ENCODE measurements at regions of chr9 and their contacts with region 1.

Region 1: DNA sequence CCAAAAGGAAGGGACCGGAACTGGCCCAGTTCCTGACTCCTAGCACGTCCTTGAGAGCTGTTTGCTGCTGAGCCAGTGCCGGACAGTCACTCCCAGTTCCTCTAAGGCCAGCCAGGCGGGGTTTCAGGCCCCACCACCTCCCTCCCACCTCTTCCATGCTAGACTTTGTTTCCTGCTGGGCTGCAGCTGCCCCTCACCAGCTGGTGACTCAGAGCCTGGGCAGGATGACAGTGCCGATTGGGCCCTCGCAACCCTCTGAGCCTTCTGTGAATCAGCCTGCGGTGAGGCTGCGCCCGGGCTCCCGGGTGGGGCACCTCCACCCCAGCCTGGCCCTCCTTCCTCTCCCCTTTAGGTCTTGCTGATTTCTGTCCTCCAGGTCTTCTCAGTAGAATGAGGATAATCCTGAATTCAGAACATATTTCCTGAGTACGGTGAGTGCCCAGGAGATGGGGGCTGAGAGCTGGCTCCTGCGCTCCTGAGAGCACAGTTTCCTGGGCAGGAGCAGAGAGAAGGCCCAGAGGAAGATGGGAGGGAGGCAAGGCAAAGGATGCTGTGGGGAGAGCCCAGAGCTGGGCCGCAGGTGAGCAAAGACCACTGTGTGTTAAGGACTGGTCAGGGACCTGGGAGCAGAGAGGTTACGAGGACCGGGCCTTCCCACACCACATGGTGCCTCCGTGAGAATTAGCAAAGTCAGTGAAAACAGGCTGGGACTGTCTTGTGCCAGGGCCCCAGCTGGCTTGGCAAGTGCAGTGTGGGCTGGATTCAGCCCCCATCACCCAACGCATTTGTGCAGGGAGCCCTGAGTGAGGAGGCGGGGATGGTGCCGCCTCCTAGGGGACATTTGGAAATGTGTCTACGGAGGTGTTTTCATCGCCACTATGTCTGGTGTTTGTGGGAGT is 32.9 kb upstream of the STXBP1 start:
- DNase-seq: peak; percentile 83 to 96 (median 95)
- H3K4me3 ChIP-seq: peak overlapping the region in 4 of 7 experiments; percentile 37 to 58 (median 49)
- H3K27ac ChIP-seq: peak overlapping the region in 1 of 2 experiments; percentile 56
- H3K4me1 ChIP-seq: peaks cover 3 to 55% (median 24%) of the 10 kb centered on the region in 4 experiments
- H3K27me3 ChIP-seq: no peaks in the 10 kb centered on the region

Region 2: GRCh38 chr9:127555768-127556397 is 23.3 kb before region 1 on chr9:
- CTCF ChIA-PET with region 1: interaction called, 29 read pairs
- POLR2A ChIA-PET with region 1: no interaction called
- DNase-seq: peak; percentile 95 to 98 (median 98)
- H3K4me3 ChIP-seq: peak overlapping the region in 3 of 7 experiments; percentile 26 to 50 (median 37)
- H3K27ac ChIP-seq: peak overlapping the region in 1 of 2 experiments; percentile 70
- H3K4me1 ChIP-seq: peaks cover 8 to 77% (median 44%) of the 10 kb centered on the region in 4 experiments
- H3K27me3 ChIP-seq: no peaks in the 10 kb centered on the region

Measured in common myeloid progenitor, CD34-positive (primary cell).